Activated B cell treated with CpG ODN at 0.5 μM for 24 hours (primary cell): ENCODE measurements at regions of chr22 and their contacts with region 1.

Region 1: GRCh38 chr22:29499852-29500251 is 19.8 kb downstream of the NEFH start:
- DNase-seq: no peak
- ATAC-seq: no peak
- H3K4me3 Mint-ChIP-seq: no peak overlapping the region
- H3K27ac Mint-ChIP-seq: no peak overlapping the region
- H3K4me1 Mint-ChIP-seq: no peaks in the 10 kb centered on the region
- H3K27me3 Mint-ChIP-seq: no peaks in the 10 kb centered on the region
- CTCF ChIP-seq: no peak

Region 2: GRCh38 chr22:29427176-29427760 is 72.6 kb before region 1 on chr22:
- CTCF ChIA-PET with region 1: no interaction called
- POLR2A ChIA-PET with region 1: interaction called, 13 read pairs
- intact Hi-C with region 1: no loop called
- DNase-seq: no peak
- ATAC-seq: no peak
- H3K4me3 Mint-ChIP-seq: no peak overlapping the region
- H3K27ac Mint-ChIP-seq: no peak overlapping the region
- H3K4me1 Mint-ChIP-seq: no peaks in the 10 kb centered on the region
- H3K27me3 Mint-ChIP-seq: peaks cover 10% of the 10 kb centered on the region
- CTCF ChIP-seq: no peak

Region 3: DNA sequence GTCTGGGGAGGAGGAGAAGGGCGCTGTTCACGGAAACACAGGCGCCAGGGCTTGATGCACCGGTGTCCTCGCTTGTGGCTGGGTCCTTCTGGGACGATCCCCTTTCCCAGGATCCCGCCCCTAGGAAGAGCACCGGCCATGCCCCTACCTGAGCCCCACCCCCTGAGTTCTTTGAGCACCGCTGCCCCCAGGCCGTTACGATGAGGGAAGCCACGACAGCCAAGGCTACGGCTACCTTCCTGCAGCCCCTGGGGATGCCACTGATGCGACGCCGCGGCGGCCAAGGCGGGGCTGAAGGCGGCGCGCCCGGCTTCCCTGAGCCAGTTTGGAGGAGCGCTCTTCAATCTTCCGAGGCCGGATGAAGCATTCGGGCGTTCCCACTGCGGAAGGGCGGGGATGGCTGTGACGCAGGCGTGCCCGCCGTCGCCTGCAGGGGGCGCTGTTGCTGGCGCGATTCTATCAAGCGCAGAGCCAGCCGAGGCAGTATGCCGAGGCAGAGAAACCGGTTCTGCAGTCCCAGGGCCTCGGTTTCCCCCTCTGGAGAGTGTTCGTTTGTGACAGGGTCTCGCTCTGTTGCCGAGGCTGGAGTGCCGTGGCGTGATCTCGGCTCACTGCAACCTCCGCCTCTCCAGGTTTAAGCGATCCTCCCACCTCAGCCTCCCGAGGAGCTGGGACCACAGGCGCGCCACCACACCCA is 29.5 kb before region 1 on chr22:
- CTCF ChIA-PET with region 1: no interaction called
- POLR2A ChIA-PET with region 1: interaction called, 10 read pairs
- intact Hi-C with region 1: no loop called
- DNase-seq: peak; percentile 54
- ATAC-seq: peak; percentile 69
- H3K4me3 Mint-ChIP-seq: peak overlapping the region; percentile 56
- H3K27ac Mint-ChIP-seq: no peak overlapping the region
- H3K4me1 Mint-ChIP-seq: peaks cover 14% of the 10 kb centered on the region
- H3K27me3 Mint-ChIP-seq: peaks cover 20% of the 10 kb centered on the region
- CTCF ChIP-seq: peak; percentile 36

Region 4: GRCh38 chr22:29580200-29580810 is 80.5 kb after region 1 on chr22:
- CTCF ChIA-PET with region 1: no interaction called
- POLR2A ChIA-PET with region 1: no interaction called
- intact Hi-C with region 1: no loop called
- DNase-seq: no peak
- ATAC-seq: no peak
- H3K4me3 Mint-ChIP-seq: peak overlapping the region; percentile 92
- H3K27ac Mint-ChIP-seq: peak overlapping the region; percentile 86
- H3K4me1 Mint-ChIP-seq: peaks cover 18% of the 10 kb centered on the region
- H3K27me3 Mint-ChIP-seq: no peaks in the 10 kb centered on the region
- CTCF ChIP-seq: no peak

Region 5: DNA sequence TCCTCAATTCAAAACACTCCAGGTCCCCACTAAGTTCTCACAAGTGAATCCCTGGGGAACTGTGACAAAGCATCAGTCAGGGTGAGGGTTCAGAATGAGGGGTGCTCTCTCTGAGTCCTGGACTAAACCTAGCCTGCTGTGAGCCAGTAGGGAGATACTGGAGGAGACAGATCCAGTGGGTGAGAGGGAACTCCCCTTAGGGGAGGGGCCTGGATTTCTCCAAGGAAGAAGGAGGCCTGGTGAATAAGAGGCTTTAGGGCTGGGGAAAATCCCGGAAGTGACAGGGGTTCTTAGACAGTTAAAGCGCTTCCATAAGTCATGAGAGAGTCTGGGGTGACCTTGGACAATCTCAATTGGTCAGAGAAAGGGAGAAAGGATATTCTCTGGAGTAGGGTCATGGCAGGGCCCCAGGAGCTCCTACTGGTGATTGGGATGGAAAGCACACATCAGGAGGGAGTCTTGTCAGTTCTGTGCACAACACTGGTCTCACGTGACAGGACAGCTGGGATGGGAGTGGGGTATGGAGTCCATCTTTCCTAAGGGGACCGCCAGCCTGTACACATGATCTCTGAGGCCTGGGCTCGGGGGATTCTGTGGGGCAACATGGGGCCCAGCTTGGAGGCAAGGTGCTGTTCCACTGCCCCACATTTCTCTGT is 825.3 kb after region 1 on chr22:
- CTCF ChIA-PET with region 1: no interaction called
- POLR2A ChIA-PET with region 1: no interaction called
- intact Hi-C with region 1: no loop called
- DNase-seq: no peak
- ATAC-seq: no peak
- H3K4me3 Mint-ChIP-seq: peak overlapping the region; percentile 86
- H3K27ac Mint-ChIP-seq: no peak overlapping the region
- H3K4me1 Mint-ChIP-seq: peaks cover 53% of the 10 kb centered on the region
- H3K27me3 Mint-ChIP-seq: no peaks in the 10 kb centered on the region
- CTCF ChIP-seq: no peak